ENCODE measurements at regions of chr12 and their contacts with region 1.

Region 1: GRCh38 chr12:103495479-103496456 is at the start of gene C12orf42:
- DNase-seq: peak; percentile 67
- H3K4me3 ChIP-seq: peak within 1 kb of the TSS; percentile 51 to 64 (median 53)
- H3K27ac ChIP-seq: peak within 1 kb of the TSS; percentile 55
- H3K4me1 ChIP-seq: peaks cover 39% of the 10 kb centered on the region
- H3K27me3 ChIP-seq: no peaks in the 10 kb centered on the region
- CTCF ChIP-seq: peak; percentile 88 to 90
- total RNA-seq, gene C12orf42: not detected

Region 2: DNA sequence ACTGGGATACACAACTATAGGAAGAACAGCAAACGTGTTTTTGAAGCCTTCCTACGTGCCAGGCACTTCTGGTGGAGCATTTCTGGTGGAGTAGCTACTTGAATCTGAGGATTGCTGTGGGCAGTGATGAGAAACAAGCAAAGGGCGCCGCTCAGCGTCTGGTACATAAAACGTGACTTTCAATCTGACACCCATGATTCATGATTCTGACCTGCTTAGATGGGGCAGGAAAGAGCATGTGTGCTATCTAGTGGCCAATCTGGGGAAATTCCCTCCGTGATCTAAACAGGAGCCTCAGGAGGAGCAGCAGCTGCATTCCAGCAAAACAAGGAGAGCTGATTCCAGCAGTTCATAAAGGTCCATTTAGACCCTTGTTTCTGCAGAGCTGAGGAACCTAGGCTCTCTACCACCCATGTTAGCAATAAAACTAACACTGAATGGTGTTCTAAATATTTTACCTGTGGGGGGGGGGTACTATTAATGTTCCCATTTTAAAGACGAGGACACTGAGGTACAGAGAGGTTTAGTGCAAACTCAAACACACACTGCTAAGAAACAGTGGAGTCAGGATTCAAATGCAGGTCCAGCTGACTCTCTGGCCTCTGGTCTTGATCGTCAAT is 616.5 kb before region 1 on chr12:
- CTCF ChIA-PET with region 1: no interaction called
- dilution Hi-C with region 1: no loop called
- in situ Hi-C with region 1: no loop called
- intact Hi-C with region 1: loop called (anchors 1 kb)
- DNase-seq: peak; percentile 79
- H3K4me3 ChIP-seq: no peak overlapping the region
- H3K27ac ChIP-seq: no peak overlapping the region
- H3K4me1 ChIP-seq: no peaks in the 10 kb centered on the region
- H3K27me3 ChIP-seq: peaks cover 2% of the 10 kb centered on the region
- CTCF ChIP-seq: peak; percentile 46 to 57

Region 3: GRCh38 chr12:102948941-102949352 is 546.8 kb before region 1 on chr12:
- CTCF ChIA-PET with region 1: no interaction called
- dilution Hi-C with region 1: no loop called
- in situ Hi-C with region 1: no loop called
- intact Hi-C with region 1: loop called (anchors 1 kb)
- DNase-seq: no peak
- H3K4me3 ChIP-seq: no peak overlapping the region
- H3K27ac ChIP-seq: no peak overlapping the region
- H3K4me1 ChIP-seq: peaks cover 4% of the 10 kb centered on the region
- H3K27me3 ChIP-seq: peaks cover 25% of the 10 kb centered on the region
- CTCF ChIP-seq: peak; percentile 81 to 94

Region 4: GRCh38 chr12:103401421-103401820 is 94.3 kb before region 1 on chr12:
- CTCF ChIA-PET with region 1: no interaction called
- dilution Hi-C with region 1: no loop called
- in situ Hi-C with region 1: no loop called
- intact Hi-C with region 1: loop called (anchors 1 kb)
- DNase-seq: peak; percentile 78
- H3K4me3 ChIP-seq: no peak overlapping the region
- H3K27ac ChIP-seq: no peak overlapping the region
- H3K4me1 ChIP-seq: peaks cover 5% of the 10 kb centered on the region
- H3K27me3 ChIP-seq: no peaks in the 10 kb centered on the region
- CTCF ChIP-seq: peak; percentile 56 to 61

Region 5: DNA sequence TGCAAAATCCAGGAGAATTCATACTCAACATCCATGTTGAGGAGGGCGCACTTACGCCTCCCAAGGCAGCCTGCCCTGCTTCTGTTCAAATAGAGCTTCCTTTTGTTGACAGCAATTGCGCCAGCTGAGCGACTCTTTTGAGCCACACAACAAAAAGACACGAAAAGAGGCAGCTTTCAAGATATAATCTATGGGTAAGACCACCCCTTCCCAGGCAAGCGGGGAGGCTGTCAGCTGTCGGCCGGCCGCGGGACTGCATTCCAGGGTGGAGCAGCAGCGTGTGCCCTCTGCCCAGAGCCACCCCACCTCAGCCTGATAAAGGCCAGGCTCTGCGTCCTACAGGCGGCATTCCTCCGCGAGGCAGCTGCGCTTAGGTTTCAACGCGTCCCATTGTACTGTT is 75.5 kb after region 1 on chr12:
- CTCF ChIA-PET with region 1: no interaction called
- dilution Hi-C with region 1: no loop called
- in situ Hi-C with region 1: no loop called
- intact Hi-C with region 1: loop called (anchors 1 kb)
- DNase-seq: no peak
- H3K4me3 ChIP-seq: no peak overlapping the region
- H3K27ac ChIP-seq: no peak overlapping the region
- H3K4me1 ChIP-seq: peaks cover 12% of the 10 kb centered on the region
- H3K27me3 ChIP-seq: no peaks in the 10 kb centered on the region
- CTCF ChIP-seq: no peak